ENCODE measurements at regions of chr12 and their contacts with region 1.

Region 1: GRCh38 chr12:6890789-6891645 is 13.6 kb upstream of the LRRC23 start:
- DNase-seq: peak; percentile 99
- ATAC-seq: peak; percentile 97
- H3K4me3 Mint-ChIP-seq: peak overlapping the region; percentile 82
- H3K27ac Mint-ChIP-seq: peak overlapping the region; percentile 95
- H3K4me1 Mint-ChIP-seq: peaks cover 29% of the 10 kb centered on the region
- H3K27me3 Mint-ChIP-seq: no peaks in the 10 kb centered on the region

Region 2: GRCh38 chr12:6851921-6852650 is 38.9 kb before region 1 on chr12 and contains the start of gene USP5:
- CTCF ChIA-PET with region 1: interaction called, 14 read pairs
- POLR2A ChIA-PET with region 1: interaction called, 13 read pairs
- DNase-seq: peak; percentile 99
- ATAC-seq: peak; percentile 83
- H3K4me3 Mint-ChIP-seq: peak within 1 kb of the TSS; percentile 90
- H3K27ac Mint-ChIP-seq: peak within 1 kb of the TSS; percentile 98
- H3K4me1 Mint-ChIP-seq: peaks cover 44% of the 10 kb centered on the region
- H3K27me3 Mint-ChIP-seq: no peaks in the 10 kb centered on the region
- total RNA-seq, gene USP5: 105 to 108 TPM

Region 3: GRCh38 chr12:6904280-6905278 is 13.6 kb after region 1 on chr12 and contains the start of gene LRRC23:
- CTCF ChIA-PET with region 1: interaction called, 40 read pairs
- POLR2A ChIA-PET with region 1: interaction called, 14 read pairs
- DNase-seq: peak; percentile 99
- ATAC-seq: peak; percentile 95
- H3K4me3 Mint-ChIP-seq: no peak within 1 kb of the TSS
- H3K27ac Mint-ChIP-seq: no peak within 1 kb of the TSS
- H3K4me1 Mint-ChIP-seq: peaks cover 11% of the 10 kb centered on the region
- H3K27me3 Mint-ChIP-seq: no peaks in the 10 kb centered on the region
- total RNA-seq, gene LRRC23: 6.5 to 8.6 TPM

Region 4: DNA sequence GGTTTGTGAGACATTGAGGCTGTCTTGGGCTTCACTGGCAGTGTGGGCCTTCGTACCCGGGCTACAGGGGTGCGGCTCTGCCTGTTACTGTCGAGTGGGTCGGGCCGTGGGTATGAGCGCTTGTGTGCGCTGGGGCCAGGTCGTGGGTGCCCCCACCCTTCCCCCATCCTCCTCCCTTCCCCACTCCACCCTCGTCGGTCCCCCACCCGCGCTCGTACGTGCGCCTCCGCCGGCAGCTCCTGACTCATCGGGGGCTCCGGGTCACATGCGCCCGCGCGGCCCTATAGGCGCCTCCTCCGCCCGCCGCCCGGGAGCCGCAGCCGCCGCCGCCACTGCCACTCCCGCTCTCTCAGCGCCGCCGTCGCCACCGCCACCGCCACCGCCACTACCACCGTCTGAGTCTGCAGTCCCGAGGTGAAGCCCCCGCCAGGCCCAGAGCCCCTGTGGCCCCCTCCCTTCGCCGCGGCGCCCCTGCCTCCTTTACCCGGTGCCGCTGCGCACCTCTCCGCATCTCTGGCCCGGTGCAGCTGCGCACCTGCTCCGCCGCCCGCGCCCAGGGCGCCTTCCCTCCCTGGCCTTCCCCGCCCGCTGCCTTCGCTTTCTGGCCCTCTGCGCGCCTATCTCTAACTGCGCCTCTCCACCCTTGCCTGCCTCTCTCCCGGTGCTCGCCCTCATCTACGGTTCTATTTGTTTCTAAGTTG is 23.4 kb after region 1 on chr12 and contains the start of gene ENO2:
- CTCF ChIA-PET with region 1: interaction called, 18 read pairs
- POLR2A ChIA-PET with region 1: interaction called, 11 read pairs
- DNase-seq: peak; percentile 87
- ATAC-seq: peak; percentile 92
- H3K4me3 Mint-ChIP-seq: peak within 1 kb of the TSS; percentile 92
- H3K27ac Mint-ChIP-seq: peak within 1 kb of the TSS; percentile 84
- H3K4me1 Mint-ChIP-seq: peaks cover 45% of the 10 kb centered on the region
- H3K27me3 Mint-ChIP-seq: peaks cover 5% of the 10 kb centered on the region
- total RNA-seq, gene ENO2: 133 to 141 TPM

Region 5: GRCh38 chr12:6921996-6922946 is 31.3 kb after region 1 on chr12:
- CTCF ChIA-PET with region 1: interaction called, 11 read pairs
- POLR2A ChIA-PET with region 1: no interaction called
- DNase-seq: no peak
- ATAC-seq: no peak
- H3K4me3 Mint-ChIP-seq: no peak overlapping the region
- H3K27ac Mint-ChIP-seq: no peak overlapping the region
- H3K4me1 Mint-ChIP-seq: peaks cover 56% of the 10 kb centered on the region
- H3K27me3 Mint-ChIP-seq: no peaks in the 10 kb centered on the region

Measured in activated CD8-positive, alpha-beta T cell treated with anti-CD3 and anti-CD28 coated beads, Interleukin-2, amount 10 ng/mL, durations not matched to agents 7 days and 5 days (primary cell).